OCI-LY7 (cell line): ENCODE measurements at regions of chr6 and their contacts with region 1.

Region 1: GRCh38 chr6:163413345-163414116 is 987 bp upstream of the QKI start:
- DNase-seq: peak; percentile 90
- H3K4me3 ChIP-seq: peak overlapping the region; percentile 72
- H3K27ac ChIP-seq: peak overlapping the region; percentile 74
- H3K4me1 ChIP-seq: peaks cover 18% of the 10 kb centered on the region
- CTCF ChIP-seq: no peak

Region 2: DNA sequence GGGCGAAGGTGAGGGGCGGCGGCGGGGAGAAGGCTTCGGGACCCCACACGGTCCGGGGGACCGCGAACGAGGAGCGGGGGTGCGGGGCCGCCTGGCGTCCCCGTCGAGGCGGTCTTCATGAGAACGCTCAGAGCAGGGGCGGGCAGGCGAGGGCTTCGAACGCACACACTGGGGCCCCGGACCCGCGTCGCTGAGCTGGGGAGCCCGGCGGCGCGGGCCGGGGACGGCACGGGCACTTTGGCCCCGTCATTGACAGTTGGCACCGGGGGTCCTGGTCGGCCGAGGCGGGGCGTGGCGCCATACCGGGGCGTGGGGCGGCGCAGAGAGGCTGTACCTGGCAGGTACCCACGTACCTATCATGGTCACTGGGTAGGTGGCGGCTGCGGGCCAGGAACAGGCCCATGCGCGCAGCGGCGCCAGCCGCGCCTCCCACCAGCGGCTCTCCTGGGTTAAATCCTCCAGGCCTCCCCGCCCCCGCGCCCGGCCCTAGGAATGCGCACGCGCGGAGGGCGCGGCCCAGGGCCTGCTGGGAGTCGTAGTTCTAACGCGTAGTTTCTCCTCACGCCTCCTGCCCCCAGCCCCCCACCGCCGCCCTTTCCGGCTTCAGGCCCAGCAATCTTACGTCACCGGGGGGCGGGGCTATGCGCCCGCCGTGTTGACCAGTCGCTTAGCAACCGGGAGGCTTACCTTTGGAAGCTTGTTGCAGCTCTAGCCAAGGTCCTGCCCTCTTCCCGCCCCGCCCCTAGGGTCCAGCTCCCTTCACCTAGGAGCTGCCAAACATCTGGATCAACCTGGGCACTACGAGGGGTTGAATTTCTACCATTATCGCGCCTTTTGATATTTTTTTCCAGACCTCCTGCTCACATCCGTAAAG is 686.0 kb before region 1 on chr6 and contains the starts of genes PACRG and PRKN:
- CTCF ChIA-PET with region 1: no interaction called
- POLR2A ChIA-PET with region 1: no interaction called
- intact Hi-C with region 1: loop called (anchors 5 kb)
- DNase-seq: peak; percentile 96
- H3K4me3 ChIP-seq: peak within 1 kb of the TSS; percentile 78
- H3K27ac ChIP-seq: no peak within 1 kb of the TSS
- H3K4me1 ChIP-seq: peaks cover 4% of the 10 kb centered on the region
- CTCF ChIP-seq: no peak
- total RNA-seq, gene PACRG: not detected in 2 replicates
- total RNA-seq, gene PRKN: 2.0 TPM in 1 of 2 replicates, not detected in the other

Region 3: GRCh38 chr6:163667372-163668060 is 254.0 kb after region 1 on chr6:
- CTCF ChIA-PET with region 1: no interaction called
- POLR2A ChIA-PET with region 1: interaction called, 3 read pairs
- intact Hi-C with region 1: loop called (anchors 2 kb)
- DNase-seq: peak; percentile 94
- H3K4me3 ChIP-seq: peak overlapping the region; percentile 43
- H3K27ac ChIP-seq: peak overlapping the region; percentile 75
- H3K4me1 ChIP-seq: peaks cover 26% of the 10 kb centered on the region
- CTCF ChIP-seq: no peak

Region 4: DNA sequence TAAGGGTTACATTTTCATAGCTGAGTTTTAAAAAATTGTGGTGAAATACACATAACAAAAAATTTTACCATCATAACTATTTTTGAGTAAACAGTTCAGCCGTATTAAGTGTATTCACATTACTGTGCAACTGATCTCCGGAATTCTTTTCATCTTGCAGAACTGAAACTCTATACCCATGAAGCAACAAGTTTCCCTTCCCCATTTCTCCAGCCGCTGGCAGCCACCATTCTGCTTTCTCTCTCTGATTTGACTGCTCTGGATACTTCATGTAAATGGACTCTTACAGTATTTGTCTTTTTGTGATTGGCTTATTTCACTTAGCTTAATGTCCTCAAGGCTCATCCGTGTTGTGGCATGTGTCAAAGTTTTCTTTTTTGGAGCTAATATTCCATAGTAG is 342.5 kb after region 1 on chr6:
- CTCF ChIA-PET with region 1: no interaction called
- POLR2A ChIA-PET with region 1: no interaction called
- intact Hi-C with region 1: loop called (anchors 5 kb)
- DNase-seq: peak; percentile 93
- H3K4me3 ChIP-seq: peak overlapping the region; percentile 55
- H3K27ac ChIP-seq: peak overlapping the region; percentile 86
- H3K4me1 ChIP-seq: peaks cover 54% of the 10 kb centered on the region
- CTCF ChIP-seq: no peak

Region 5: DNA sequence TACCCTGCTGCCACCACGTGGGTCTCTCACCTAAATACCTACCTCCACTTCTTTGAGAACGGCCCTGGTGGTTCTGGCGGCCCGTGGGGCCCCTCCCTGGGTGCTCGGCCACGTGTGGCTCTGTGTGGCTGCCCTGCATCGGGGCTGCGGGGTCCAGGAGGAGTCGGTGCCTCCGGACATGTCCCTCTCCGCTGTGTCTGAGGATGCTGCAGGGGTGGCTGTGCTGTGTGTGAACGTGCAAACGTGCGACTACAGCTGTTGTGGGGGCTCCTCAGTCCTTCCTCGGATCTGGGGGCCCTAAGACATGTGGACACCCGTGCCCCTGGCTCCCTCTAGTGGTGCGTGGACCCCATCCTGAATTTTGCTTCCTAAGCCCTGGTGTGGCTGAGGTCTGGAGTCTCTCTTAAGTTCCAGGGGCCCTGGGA is 692.8 kb after region 1 on chr6:
- CTCF ChIA-PET with region 1: no interaction called
- POLR2A ChIA-PET with region 1: no interaction called
- intact Hi-C with region 1: loop called (anchors 5 kb)
- DNase-seq: peak; percentile 24
- H3K4me3 ChIP-seq: no peak overlapping the region
- H3K27ac ChIP-seq: no peak overlapping the region
- H3K4me1 ChIP-seq: no peaks in the 10 kb centered on the region
- CTCF ChIP-seq: peak; percentile 73